ENCODE measurements at regions of chr9 and their contacts with region 1.

Region 1: DNA sequence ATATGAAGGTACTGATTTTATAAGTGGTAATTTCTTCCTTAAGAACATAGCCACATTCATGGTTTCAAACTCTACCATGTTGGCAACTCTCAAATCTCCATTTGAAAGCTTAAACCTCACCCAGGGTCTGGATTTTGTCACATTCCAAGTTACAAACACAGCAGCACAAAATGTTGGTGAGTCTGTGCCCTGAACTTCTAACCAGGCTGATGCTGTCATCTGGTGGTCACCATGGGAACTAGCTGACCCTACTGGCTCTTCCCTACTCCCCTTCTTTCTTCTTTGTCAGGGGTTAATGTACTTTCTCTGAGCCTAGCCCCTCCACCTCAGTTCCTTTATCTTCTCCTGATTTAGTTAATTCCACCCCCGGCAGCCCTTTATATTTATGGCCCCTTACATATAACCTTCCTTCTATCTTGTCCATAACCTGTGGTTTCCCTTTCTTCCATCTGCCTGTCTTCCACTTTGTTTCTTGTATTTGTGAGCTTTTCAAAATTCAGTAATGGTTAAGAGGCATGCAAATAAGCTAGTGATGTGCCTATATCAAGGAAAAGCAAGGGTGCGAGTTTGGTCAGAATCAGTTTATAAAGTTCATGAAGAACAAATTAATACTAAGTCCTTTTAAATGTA is 35.9 kb downstream of the TGFBR1 start:
- DNase-seq: peak; percentile 75

Region 2: DNA sequence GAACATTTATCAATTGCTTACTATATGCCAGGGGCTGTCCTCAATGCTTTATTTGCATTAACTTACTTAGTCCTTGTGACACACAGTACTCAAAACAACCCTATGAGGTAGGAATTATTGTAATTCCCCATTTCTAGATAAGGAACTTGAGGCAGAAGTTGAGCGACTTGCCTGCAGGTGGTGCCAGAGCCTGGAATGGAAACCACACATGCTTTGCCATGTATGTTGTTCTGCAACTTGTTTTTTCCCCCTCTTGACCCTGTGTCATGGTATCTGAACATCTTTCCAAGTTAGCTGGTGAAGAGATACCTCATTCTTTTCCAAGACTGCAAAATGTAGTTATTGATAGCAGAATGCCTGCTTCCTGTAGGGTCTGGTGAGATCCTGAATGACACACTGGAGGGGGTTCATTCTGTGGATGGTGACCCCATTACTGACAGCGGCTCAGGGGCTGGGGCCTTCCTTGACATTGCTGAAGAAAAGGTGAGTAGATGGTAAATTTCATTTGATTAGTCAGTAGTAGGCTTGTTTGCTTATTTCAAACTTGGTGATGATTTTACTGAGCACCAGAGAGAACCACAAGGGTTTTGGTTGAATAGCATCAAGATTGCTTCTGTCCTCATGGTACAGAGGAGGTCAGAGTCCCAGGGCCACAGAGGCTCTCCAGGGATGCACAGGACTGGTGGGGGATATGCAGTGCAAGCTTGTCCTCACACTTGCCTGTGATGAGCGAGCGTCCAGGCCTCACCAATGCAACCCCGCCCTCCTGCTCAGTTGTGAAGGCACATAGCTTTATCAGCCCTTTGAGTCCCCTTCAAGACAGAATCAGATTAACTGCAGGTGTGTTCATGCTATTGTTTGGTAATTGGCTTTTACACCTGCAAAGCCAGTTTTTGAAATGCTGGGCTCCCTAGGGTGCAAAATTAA is 140.1 kb before region 1 on chr9:
- in situ Hi-C with region 1: loop called (anchors 25 kb)
- DNase-seq: peak; percentile 80

Region 3: GRCh38 chr9:99211741-99212140 is 70.9 kb after region 1 on chr9:
- in situ Hi-C with region 1: no loop called
- DNase-seq: no peak